GM12878 (cell line): ENCODE measurements at regions of chr1 and their contacts with region 1.

Region 1: DNA sequence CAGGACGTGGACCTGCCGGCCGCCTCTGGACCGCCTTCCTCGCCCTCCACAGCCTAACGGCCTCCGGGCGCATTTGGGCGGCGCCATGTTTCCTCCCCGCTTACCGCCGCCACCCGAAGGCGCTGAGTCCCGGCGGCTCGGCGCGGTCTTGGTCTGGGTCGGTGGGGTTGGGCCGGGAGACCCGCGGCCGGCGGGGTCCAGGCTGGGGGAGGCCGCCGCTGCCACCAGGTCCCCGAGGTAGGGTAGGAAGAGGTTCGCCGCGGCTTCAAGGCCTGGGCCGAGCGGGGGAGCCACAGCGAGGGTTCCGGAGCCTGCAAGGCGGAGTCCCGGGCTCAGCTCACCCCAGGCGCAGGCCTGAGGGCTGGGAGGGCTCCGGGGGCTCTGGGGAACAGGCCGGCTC is 5.5 kb downstream of the OR2C3 start:
- DNase-seq: no peak
- ATAC-seq: no peak
- H3K4me3 ChIP-seq: no peak overlapping the region
- H3K27ac ChIP-seq: no peak overlapping the region
- H3K4me1 ChIP-seq: no peaks in the 10 kb centered on the region
- H3K27me3 ChIP-seq: no peaks in the 10 kb centered on the region
- CTCF ChIP-seq: no peak
- EP300 ChIP-seq: no peak
- POLR2A ChIP-seq: no peak
- RAD21 ChIP-seq: no peak

Region 2: DNA sequence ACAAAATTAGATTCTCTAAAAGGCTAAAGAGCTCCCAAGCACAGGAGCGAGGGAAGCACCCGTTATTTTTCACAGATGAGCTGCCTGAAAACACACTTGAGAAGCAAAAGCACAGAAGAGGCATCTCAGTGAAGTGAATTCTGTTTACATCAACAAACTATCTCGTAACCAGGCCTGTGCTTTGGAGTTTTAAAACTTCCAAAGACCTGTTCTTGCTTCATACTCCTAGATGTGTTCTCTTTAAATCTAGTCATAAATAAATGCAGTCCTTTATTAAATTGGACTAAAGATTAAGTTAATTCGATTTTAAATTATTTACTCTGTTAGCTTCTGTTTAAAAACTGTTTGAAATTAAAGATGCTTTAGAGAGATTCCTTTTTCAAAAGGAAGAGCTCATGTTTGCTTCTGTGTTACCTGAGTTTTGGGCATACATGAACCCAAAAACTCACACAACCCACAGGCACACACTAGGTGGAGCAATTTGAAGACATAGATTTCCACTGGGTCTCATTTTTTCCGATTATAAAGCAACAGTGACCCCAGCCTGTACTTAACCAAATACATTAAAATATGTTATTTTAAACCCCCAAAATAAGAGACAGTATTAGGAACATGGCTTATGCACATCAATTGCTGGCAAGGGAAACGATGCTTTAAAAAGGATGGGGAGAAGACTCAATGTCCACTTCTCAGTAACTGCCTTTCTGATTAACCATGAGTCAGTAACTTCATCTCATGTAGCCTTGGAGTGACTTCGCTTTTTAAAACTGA is 1671.9 kb before region 1 on chr1:
- CTCF ChIA-PET with region 1: no interaction called
- POLR2A ChIA-PET with region 1: interaction called, 10 read pairs
- RAD21 ChIA-PET with region 1: no interaction called
- SMC1A ChIA-PET with region 1: no interaction called
- in situ Hi-C with region 1: no loop called
- intact Hi-C with region 1: no loop called
- DNase-seq: no peak
- ATAC-seq: no peak
- H3K4me3 ChIP-seq: no peak overlapping the region
- H3K27ac ChIP-seq: no peak overlapping the region
- H3K4me1 ChIP-seq: no peaks in the 10 kb centered on the region
- H3K27me3 ChIP-seq: no peaks in the 10 kb centered on the region
- CTCF ChIP-seq: peak in 2 of 3 experiments; percentile 7 to 29; a peak in 3 of 6 replicates
- EP300 ChIP-seq: no peak
- POLR2A ChIP-seq: no peak
- RAD21 ChIP-seq: no peak

Region 3: DNA sequence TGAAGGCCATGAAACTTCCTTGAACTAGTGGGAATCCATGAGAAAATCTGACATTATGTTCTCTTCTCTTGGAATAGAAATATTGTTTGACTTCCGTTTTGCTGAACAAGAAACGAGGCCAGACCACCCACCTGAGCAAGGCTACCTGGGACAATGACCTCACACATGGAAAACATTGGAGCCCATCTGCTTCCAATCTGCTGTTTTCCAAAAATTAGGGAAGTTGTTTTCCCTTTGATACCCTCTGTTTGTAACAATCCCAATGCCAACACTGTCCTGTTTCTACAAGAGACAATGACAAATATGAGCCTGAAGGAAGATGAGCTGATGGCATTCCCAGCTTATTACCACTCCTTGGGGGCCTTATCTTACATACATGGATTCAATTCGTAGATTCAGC is 24.0 kb before region 1 on chr1:
- CTCF ChIA-PET with region 1: no interaction called
- POLR2A ChIA-PET with region 1: no interaction called
- RAD21 ChIA-PET with region 1: no interaction called
- SMC1A ChIA-PET with region 1: no interaction called
- in situ Hi-C with region 1: no loop called
- intact Hi-C with region 1: no loop called
- DNase-seq: no peak
- ATAC-seq: no peak
- H3K4me3 ChIP-seq: no peak overlapping the region
- H3K27ac ChIP-seq: no peak overlapping the region
- H3K4me1 ChIP-seq: no peaks in the 10 kb centered on the region
- H3K27me3 ChIP-seq: no peaks in the 10 kb centered on the region
- CTCF ChIP-seq: no peak
- EP300 ChIP-seq: no peak
- POLR2A ChIP-seq: no peak
- RAD21 ChIP-seq: no peak

Region 4: DNA sequence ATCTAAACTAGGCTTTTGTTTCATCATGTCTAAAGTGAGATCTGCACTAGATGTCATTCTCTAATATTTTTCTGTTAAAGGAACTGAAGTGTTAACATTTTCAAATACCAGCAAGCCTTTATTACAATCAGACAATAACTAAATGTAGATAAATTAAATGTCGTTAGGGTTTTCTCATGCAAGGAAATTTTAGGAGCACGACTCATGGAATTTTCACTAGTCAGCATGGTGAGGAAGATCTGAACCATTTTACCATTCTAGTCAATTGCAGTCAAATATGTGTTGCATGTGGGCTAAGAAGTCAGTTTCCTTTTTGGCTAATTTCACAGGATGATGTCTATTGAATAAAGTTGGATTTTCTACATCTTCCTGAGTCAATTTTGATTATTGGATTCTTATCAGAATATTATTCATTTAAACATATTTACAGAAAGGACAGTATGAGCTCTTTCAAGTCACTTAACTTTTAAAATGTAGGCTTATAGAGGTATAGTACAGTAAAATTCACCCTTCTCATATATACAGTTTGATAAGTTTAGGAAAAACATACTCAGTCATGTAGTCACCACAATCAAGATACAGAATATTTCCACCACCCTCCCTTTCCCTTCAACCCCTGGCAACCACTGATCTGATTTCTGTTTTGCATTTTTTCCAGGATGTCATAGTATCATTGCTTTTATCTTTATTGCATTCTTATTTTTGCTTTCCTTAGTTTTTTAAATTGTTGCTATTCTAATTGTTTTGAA is 27.3 kb after region 1 on chr1:
- CTCF ChIA-PET with region 1: no interaction called
- POLR2A ChIA-PET with region 1: no interaction called
- RAD21 ChIA-PET with region 1: no interaction called
- SMC1A ChIA-PET with region 1: no interaction called
- in situ Hi-C with region 1: no loop called
- intact Hi-C with region 1: no loop called
- DNase-seq: no peak
- ATAC-seq: no peak
- H3K4me3 ChIP-seq: no peak overlapping the region
- H3K27ac ChIP-seq: no peak overlapping the region
- H3K4me1 ChIP-seq: no peaks in the 10 kb centered on the region
- H3K27me3 ChIP-seq: no peaks in the 10 kb centered on the region
- CTCF ChIP-seq: no peak
- EP300 ChIP-seq: no peak
- POLR2A ChIP-seq: no peak
- RAD21 ChIP-seq: no peak